ENCODE measurements at regions of chrX and their contacts with region 1.

Region 1: DNA sequence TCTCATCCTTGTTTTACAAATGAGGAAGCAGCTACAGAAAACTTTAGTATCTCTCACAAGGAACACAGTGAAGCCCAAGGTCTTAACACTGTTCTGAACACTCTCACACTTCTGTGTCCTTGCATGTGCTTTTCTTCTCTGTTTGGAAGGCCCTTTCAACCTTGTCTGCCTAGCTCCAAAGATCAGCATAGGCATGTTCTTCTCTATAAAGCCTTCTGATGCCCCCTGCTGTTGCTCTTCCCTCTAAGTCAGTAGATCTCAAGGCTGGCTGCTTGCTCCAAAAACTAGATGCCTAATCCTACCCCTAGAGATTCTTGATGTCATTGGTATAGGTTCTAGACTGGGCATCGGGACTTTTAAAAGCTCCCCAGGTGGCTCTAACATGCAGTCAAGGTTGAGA is 5.9 kb downstream of the APOO start:
- DNase-seq: peak; percentile 46
- H3K4me3 Mint-ChIP-seq: no peak overlapping the region
- H3K27ac Mint-ChIP-seq: no peak overlapping the region
- H3K4me1 Mint-ChIP-seq: peaks cover 15% of the 10 kb centered on the region
- H3K27me3 Mint-ChIP-seq: no peaks in the 10 kb centered on the region

Region 2: DNA sequence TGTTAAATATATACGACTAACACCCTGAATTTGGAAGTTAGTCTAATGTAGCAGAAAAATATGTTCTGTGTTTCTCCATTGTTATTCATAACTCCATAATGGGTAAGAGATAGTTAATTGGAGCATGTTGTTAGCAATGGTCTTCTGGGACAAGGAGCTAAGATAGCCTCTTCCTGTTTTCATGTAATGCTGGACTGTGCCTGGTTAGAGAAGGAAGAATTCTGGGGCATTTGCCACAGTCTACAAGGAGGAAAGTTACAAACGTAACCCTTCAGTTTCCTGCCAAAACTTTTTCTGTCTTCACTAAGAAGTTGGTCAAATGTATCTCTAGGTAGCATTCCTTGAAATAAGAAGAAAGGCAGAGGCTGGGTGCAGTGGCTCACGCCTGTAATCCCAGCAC is 228.7 kb before region 1 on chrX:
- CTCF ChIA-PET with region 1: interaction called, 11 read pairs
- POLR2A ChIA-PET with region 1: no interaction called
- intact Hi-C with region 1: no loop called
- DNase-seq: no peak
- H3K4me3 Mint-ChIP-seq: no peak overlapping the region
- H3K27ac Mint-ChIP-seq: no peak overlapping the region
- H3K4me1 Mint-ChIP-seq: peaks cover 16% of the 10 kb centered on the region
- H3K27me3 Mint-ChIP-seq: no peaks in the 10 kb centered on the region

Region 3: DNA sequence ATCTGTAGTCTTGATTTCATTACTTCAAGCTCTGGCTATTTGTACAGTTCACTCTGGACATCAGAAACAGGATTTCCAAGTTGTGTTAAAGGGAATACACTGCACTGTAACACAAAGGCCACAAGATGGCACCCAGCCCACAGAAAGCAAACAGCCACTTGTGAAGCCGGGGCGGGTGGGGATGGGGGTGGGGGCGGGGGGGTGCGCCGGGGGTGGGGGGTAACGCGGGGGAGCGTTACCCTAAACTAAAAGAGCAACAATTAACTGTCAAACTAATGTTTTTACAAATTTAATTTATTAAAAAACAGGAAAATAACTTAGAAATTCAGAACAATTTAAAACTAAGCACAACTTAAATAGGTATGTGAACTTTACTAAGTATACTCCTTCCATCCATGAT is 207.2 kb before region 1 on chrX:
- CTCF ChIA-PET with region 1: interaction called, 100 read pairs
- POLR2A ChIA-PET with region 1: interaction called, 3 read pairs
- intact Hi-C with region 1: loop called (anchors 1 kb)
- DNase-seq: peak; percentile 46
- H3K4me3 Mint-ChIP-seq: no peak overlapping the region
- H3K27ac Mint-ChIP-seq: no peak overlapping the region
- H3K4me1 Mint-ChIP-seq: no peaks in the 10 kb centered on the region
- H3K27me3 Mint-ChIP-seq: no peaks in the 10 kb centered on the region

Region 4: DNA sequence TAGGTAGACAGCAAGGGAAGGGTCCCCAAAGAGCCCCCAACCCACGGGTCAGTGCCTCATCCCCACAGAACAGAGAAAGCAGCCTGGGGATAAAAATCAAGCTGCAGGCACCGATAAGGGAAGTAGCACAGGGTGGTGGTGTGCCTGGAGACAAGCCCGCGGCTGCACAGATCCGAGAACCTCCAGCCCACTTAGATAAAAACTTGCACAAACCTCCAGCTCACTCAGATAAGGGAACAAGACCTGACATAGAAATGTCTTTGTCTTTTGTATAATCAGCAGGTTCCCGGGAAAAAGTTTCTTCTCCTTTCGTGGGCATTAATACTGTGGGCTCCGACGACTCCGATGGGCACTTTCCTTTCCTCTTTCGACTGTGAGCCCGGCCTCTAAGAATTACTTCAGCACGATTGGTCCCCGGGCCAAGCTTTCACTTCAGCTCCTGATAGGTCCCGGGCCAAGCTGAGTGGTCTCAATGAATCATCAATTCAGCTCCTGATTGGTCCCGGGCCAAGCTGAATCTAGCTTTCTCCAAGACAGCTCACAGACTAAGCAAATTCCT is 202.1 kb before region 1 on chrX:
- CTCF ChIA-PET with region 1: interaction called, 100 read pairs
- POLR2A ChIA-PET with region 1: no interaction called
- intact Hi-C with region 1: loop called (anchors 1 kb)
- DNase-seq: peak; percentile 14
- H3K4me3 Mint-ChIP-seq: peak overlapping the region; percentile 23
- H3K27ac Mint-ChIP-seq: no peak overlapping the region
- H3K4me1 Mint-ChIP-seq: peaks cover 4% of the 10 kb centered on the region
- H3K27me3 Mint-ChIP-seq: no peaks in the 10 kb centered on the region

Region 5: GRCh38 chrX:23732704-23733103 is 169.1 kb before region 1 on chrX:
- CTCF ChIA-PET with region 1: interaction called, 9 read pairs
- POLR2A ChIA-PET with region 1: no interaction called
- intact Hi-C with region 1: loop called (anchors 2 kb)
- DNase-seq: no peak
- H3K4me3 Mint-ChIP-seq: peak overlapping the region; percentile 7
- H3K27ac Mint-ChIP-seq: peak overlapping the region; percentile 92
- H3K4me1 Mint-ChIP-seq: peaks cover 33% of the 10 kb centered on the region
- H3K27me3 Mint-ChIP-seq: no peaks in the 10 kb centered on the region

Region 6: DNA sequence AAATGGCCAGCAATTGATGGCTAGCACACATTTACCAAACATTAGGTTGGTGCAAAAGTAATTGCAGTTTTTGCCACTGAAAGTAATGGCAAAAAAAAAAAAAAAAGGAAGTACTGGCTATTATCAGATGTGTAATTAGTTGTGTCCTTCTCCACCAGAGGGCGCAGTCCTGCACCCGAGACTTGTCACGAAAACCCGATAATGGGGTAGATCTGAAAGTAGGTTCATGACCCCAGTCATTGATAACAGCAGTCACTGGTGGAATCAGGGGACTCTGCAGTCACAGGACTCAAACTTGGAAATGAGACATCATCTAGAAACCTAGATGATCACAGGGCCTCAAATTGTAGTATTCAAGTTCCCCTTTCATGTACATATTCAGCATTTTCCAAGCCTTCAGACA is 145.6 kb before region 1 on chrX:
- CTCF ChIA-PET with region 1: interaction called, 16 read pairs
- POLR2A ChIA-PET with region 1: interaction called, 5 read pairs
- intact Hi-C with region 1: loop called (anchors 1 kb)
- DNase-seq: peak; percentile 62
- H3K4me3 Mint-ChIP-seq: no peak overlapping the region
- H3K27ac Mint-ChIP-seq: peak overlapping the region; percentile 49
- H3K4me1 Mint-ChIP-seq: peaks cover 8% of the 10 kb centered on the region
- H3K27me3 Mint-ChIP-seq: no peaks in the 10 kb centered on the region

Region 7: GRCh38 chrX:24629701-24630100 is 727.9 kb after region 1 on chrX:
- CTCF ChIA-PET with region 1: no interaction called
- POLR2A ChIA-PET with region 1: no interaction called
- intact Hi-C with region 1: no loop called
- DNase-seq: no peak
- H3K4me3 Mint-ChIP-seq: no peak overlapping the region
- H3K27ac Mint-ChIP-seq: no peak overlapping the region
- H3K4me1 Mint-ChIP-seq: no peaks in the 10 kb centered on the region
- H3K27me3 Mint-ChIP-seq: peaks cover 5% of the 10 kb centered on the region

Region 8: GRCh38 chrX:24693453-24694202 is 791.8 kb after region 1 on chrX and contains the start of gene POLA1:
- CTCF ChIA-PET with region 1: no interaction called
- POLR2A ChIA-PET with region 1: no interaction called
- intact Hi-C with region 1: no loop called
- DNase-seq: peak; percentile 89
- H3K4me3 Mint-ChIP-seq: peak within 1 kb of the TSS; percentile 87
- H3K27ac Mint-ChIP-seq: peak within 1 kb of the TSS; percentile 89
- H3K4me1 Mint-ChIP-seq: peaks cover 24% of the 10 kb centered on the region
- H3K27me3 Mint-ChIP-seq: no peaks in the 10 kb centered on the region
- total RNA-seq, gene POLA1: 40.9 to 41.7 TPM

Measured in activated CD4-positive, alpha-beta memory T cell treated with anti-CD3 and anti-CD28 coated beads for 36 hours (primary cell).